ENCODE measurements at regions of chr17 and their contacts with region 1.

Region 1: GRCh38 chr17:20244671-20245070 is 222.7 kb downstream of the LGALS9B start:
- DNase-seq: no peak

Region 2: DNA sequence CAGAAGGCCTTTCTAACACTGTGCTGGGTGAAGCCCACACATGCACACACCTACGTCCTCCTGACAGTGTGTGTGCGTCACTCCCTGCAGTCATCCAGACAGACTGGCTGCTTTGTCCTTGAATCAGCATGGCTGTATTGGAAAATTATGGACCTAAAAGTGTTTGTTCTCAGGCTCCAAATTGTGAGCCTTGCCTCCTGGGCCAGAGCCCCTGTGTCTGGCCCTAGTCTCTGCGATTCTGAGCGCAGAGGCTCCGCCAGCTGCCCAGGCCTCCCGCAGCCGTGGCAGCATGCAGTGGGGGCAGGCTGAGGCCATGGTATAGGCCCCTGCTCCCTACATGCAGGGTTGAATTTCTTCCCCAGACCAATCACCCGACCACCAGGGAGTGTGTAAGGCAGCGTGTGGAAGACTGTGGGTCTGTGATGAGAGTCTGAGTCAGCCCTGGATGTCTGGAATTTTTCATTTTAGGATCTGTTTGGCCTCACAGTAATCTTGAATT is 55.8 kb after region 1 on chr17:
- intact Hi-C with region 1: loop called (anchors 5 kb)
- DNase-seq: peak in 3 of 10 donors; percentile 22 to 90 (median 61)

Measured in posterior cingulate gyrus (tissue), 11 donors.